Heart left ventricle (tissue), 16 donors: ENCODE measurements at regions of chr11 and their contacts with region 1.

Region 1: GRCh38 chr11:100681064-100681502 is 6.0 kb upstream of the ARHGAP42 start:
- DNase-seq: peak; percentile 35 to 69 (median 55)
- ATAC-seq: peak; percentile 15 to 68 (median 58)
- H3K4me3 ChIP-seq: no peak overlapping the region
- H3K27ac ChIP-seq: no peak overlapping the region
- H3K4me1 ChIP-seq: peaks cover 0 to 23% (median 9%) of the 10 kb centered on the region in 12 donors
- H3K27me3 ChIP-seq: no peaks in the 10 kb centered on the region
- CTCF ChIP-seq: no peak
- POLR2A ChIP-seq: no peak

Region 2: GRCh38 chr11:100575870-100576705 is 105.0 kb before region 1 on chr11:
- intact Hi-C with region 1: loop called (anchors 2 to 10 kb)
- DNase-seq: peak in 1 of 5 donors; percentile 12
- ATAC-seq: peak in 3 of 4 donors; percentile 77 to 84 (median 80)
- H3K4me3 ChIP-seq: peak overlapping the region in 3 of 12 donors; percentile 17 to 27 (median 26)
- H3K27ac ChIP-seq: no peak overlapping the region
- H3K4me1 ChIP-seq: peaks cover 0 to 4% (median 0%) of the 10 kb centered on the region in 12 donors
- H3K27me3 ChIP-seq: no peaks in the 10 kb centered on the region
- CTCF ChIP-seq: peak; percentile 67 to 90 (median 73)
- POLR2A ChIP-seq: no peak

Region 3: DNA sequence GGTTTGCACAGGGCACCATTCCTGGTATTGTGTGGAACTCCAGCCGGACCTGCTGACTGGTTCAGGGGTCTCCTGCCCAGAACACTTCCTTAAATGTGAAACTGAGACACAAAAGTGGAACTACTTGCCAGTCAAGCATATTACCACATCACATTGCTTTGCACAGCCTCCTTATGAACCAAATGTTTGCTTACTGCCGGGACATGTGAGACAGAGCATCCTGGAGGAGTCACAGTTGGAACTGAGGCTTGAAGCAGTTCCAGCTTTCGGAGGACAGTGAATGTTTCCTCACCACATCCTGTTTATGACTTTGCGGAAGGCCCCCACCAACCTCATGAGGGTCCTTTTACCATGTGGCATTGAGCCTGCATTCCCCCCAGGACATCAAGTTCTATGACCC is 99.8 kb before region 1 on chr11:
- intact Hi-C with region 1: loop called (anchors 2 to 10 kb)
- DNase-seq: no peak
- ATAC-seq: peak in 1 of 4 donors; percentile 19
- H3K4me3 ChIP-seq: no peak overlapping the region
- H3K27ac ChIP-seq: no peak overlapping the region
- H3K4me1 ChIP-seq: peaks cover 0 to 10% (median 2%) of the 10 kb centered on the region in 12 donors
- H3K27me3 ChIP-seq: no peaks in the 10 kb centered on the region
- CTCF ChIP-seq: no peak
- POLR2A ChIP-seq: no peak

Region 4: DNA sequence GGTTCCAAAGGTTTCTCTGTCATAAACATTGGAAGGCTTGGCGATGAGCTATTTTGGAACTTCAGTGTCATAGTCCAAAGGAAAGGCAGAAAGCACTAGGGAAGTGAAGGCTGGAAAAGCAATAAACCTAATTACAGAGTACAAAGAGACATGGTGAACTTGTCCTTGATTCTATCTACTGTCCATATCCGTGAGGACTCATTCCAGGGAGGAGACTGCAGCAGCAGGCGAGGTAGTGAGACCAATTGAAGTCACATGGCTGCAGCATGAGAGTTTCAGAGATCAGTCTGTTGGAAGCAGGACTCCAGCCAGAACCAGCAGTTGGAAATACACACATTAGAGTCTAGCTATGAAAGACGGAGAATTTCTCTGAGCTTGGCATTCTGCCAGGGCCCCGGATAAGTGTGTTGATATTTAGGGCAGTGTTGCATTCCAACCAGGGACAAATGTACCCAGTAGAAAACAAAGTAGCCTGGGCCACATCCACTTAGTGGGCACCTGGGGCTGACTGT is 48.1 kb before region 1 on chr11:
- intact Hi-C with region 1: loop called in 2 of 10 experiments (anchors 2 to 5 kb)
- DNase-seq: peak; percentile 65 to 88 (median 77)
- ATAC-seq: peak; percentile 90 to 95 (median 93)
- H3K4me3 ChIP-seq: peak overlapping the region in 3 of 12 donors; percentile 8 to 23 (median 11)
- H3K27ac ChIP-seq: peak overlapping the region in 11 of 12 donors; percentile 36 to 83 (median 60)
- H3K4me1 ChIP-seq: peaks cover 0 to 33% (median 14%) of the 10 kb centered on the region in 12 donors
- H3K27me3 ChIP-seq: no peaks in the 10 kb centered on the region
- CTCF ChIP-seq: no peak
- POLR2A ChIP-seq: no peak

Region 5: GRCh38 chr11:100849009-100849900 is 168.2 kb after region 1 on chr11:
- intact Hi-C with region 1: loop called in 7 of 10 experiments (anchors 2 to 5 kb)
- DNase-seq: no peak
- ATAC-seq: peak in 3 of 4 donors; percentile 47 to 86 (median 62)
- H3K4me3 ChIP-seq: peak overlapping the region in 2 of 12 donors; percentile 7 to 8
- H3K27ac ChIP-seq: peak overlapping the region in 9 of 12 donors; percentile 13 to 61 (median 36)
- H3K4me1 ChIP-seq: peaks cover 0 to 28% (median 17%) of the 10 kb centered on the region in 12 donors
- H3K27me3 ChIP-seq: no peaks in the 10 kb centered on the region
- CTCF ChIP-seq: no peak
- POLR2A ChIP-seq: no peak

Region 6: DNA sequence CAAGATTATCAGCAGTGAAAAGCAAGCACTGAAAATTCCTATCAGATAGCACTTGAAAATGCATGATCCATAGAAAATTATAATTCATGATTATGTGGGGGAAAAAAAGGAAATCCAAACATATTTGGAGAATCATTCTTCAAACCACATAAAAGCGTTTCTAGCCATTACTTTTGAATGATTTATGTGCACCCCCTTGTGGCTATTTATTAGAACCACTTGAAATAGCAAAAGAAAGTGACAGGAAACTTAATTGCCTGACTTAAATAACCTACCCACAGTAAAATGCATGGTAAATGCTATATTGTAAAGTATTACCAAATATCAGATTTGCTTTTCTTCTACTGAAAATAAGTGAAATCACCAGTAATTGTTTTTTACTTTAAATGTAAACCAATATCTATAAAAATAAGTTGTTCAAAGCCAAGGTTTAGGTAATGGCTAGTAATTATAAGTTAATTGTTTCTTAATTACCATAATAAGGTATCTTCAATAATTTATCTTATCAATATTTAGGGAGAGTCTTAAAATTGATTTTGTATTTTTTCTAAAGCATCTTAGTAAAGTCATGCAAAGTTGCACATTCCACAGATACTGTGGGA is 174.5 kb after region 1 on chr11:
- intact Hi-C with region 1: loop called (anchors 1 to 5 kb)
- DNase-seq: no peak
- ATAC-seq: peak in 1 of 4 donors; percentile 51
- H3K4me3 ChIP-seq: no peak overlapping the region
- H3K27ac ChIP-seq: no peak overlapping the region
- H3K4me1 ChIP-seq: peaks cover 0 to 8% (median 2%) of the 10 kb centered on the region in 12 donors
- H3K27me3 ChIP-seq: no peaks in the 10 kb centered on the region
- CTCF ChIP-seq: peak; percentile 48 to 81 (median 71)
- POLR2A ChIP-seq: no peak